Aorta (tissue), 5 donors: ENCODE measurements at regions of chr16 and their contacts with region 1.

Region 1: DNA sequence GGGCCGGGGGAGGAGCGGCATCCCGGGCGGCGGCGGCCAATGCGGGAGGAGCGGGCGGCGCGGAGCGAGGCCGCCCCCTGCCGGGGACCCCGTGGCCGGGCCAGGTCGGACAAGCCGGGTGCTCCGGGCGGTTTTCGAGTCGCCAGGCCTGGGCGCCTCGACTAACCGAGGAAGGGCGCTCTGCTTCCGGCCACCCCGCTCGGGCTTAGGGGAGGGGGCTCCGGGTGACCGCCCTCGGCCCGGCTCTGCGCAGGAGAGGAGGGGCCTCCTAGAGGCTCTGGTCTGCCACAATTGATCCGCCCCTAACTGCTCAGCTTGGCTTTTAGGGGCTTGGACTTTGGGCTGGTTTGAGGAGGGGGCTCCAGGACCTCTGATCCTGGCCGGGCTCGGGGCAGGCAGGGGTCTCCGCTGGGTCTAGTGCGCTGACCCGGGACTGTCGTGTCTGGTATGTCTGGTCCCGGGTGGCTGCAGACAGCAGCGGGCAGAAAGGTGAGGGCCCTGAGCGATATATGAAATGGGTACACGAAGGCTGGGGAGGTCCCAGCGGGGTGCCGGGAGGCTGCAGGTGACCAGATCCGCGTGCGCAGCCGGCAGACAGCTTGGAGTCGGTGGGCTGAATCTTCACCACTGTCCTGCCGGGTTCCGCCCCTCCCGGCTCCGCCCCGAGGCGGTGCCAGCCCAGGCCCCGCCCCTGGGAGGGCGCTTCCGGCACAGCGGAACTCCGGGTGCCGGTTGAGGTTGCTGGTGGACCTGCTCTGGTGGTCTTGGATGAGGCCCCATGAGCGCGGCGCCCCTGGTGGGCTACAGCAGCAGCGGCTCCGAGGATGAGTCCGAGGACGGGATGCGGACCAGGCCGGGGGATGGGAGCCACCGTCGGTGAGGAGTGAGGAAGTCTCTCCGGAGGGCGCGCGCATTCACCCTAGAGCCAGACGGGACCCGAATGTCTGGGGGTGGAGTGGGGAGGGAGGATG is at the start of gene USB1:
- DNase-seq: peak; percentile 90 to 96
- ATAC-seq: peak; percentile 95
- H3K4me3 ChIP-seq: peak within 1 kb of the TSS; percentile 87 to 90
- H3K27ac ChIP-seq: peak within 1 kb of the TSS; percentile 23 to 62
- H3K4me1 ChIP-seq: no peaks in the 10 kb centered on the region
- H3K27me3 ChIP-seq: no peaks in the 10 kb centered on the region
- total RNA-seq, gene USB1: 31.8 to 41.3 TPM

Region 2: GRCh38 chr16:57576429-57576870 is 424.5 kb before region 1 on chr16:
- intact Hi-C with region 1: loop called in 1 of 2 experiments (anchors 10 kb)
- DNase-seq: peak; percentile 77 to 92
- ATAC-seq: peak; percentile 71
- H3K4me3 ChIP-seq: no peak overlapping the region
- H3K27ac ChIP-seq: no peak overlapping the region
- H3K4me1 ChIP-seq: no peaks in the 10 kb centered on the region
- H3K27me3 ChIP-seq: no peaks in the 10 kb centered on the region

Region 3: DNA sequence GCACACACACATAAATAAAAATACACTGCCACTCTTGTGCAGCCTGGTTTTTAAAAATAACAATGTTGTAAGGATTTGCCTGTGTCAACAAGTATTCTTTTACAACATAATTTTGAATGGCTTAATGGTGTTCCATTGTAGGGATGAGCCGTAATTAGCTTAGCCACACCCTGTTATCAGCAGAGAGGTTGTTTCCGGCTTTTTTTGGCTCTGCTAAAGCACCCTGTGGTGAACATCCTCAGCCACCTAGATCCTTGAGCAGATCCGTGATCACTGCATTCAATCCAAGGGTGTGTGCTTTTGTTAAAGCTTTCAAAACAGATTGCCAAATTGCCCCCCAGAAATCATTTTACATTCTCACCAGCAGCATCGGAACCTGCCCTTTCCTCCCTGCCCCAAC is 258.4 kb before region 1 on chr16:
- intact Hi-C with region 1: no loop called
- DNase-seq: no peak
- ATAC-seq: no peak
- H3K4me3 ChIP-seq: no peak overlapping the region
- H3K27ac ChIP-seq: no peak overlapping the region
- H3K4me1 ChIP-seq: no peaks in the 10 kb centered on the region
- H3K27me3 ChIP-seq: no peaks in the 10 kb centered on the region

Region 4: GRCh38 chr16:57757326-57757786 is 243.6 kb before region 1 on chr16:
- intact Hi-C with region 1: loop called (anchors 5 kb)
- DNase-seq: peak; percentile 92 to 97
- ATAC-seq: peak; percentile 88
- H3K4me3 ChIP-seq: no peak overlapping the region
- H3K27ac ChIP-seq: no peak overlapping the region
- H3K4me1 ChIP-seq: no peaks in the 10 kb centered on the region
- H3K27me3 ChIP-seq: no peaks in the 10 kb centered on the region

Region 5: GRCh38 chr16:57802341-57803133 is 198.5 kb before region 1 on chr16 and contains the start of gene KIFC3:
- intact Hi-C with region 1: loop called in 1 of 2 experiments (anchors 5 kb)
- DNase-seq: peak; percentile 94 to 98
- ATAC-seq: peak; percentile 77
- H3K4me3 ChIP-seq: peak within 1 kb of the TSS; percentile 46 to 57
- H3K27ac ChIP-seq: peak within 1 kb of the TSS in 1 of 2 donors; percentile 38
- H3K4me1 ChIP-seq: no peaks in the 10 kb centered on the region
- H3K27me3 ChIP-seq: no peaks in the 10 kb centered on the region
- total RNA-seq, gene KIFC3: 69.7 to 80.1 TPM

Region 6: GRCh38 chr16:57899771-57900661 is 101.0 kb before region 1 on chr16:
- intact Hi-C with region 1: loop called (anchors 2 kb)
- DNase-seq: peak; percentile 77 to 90
- ATAC-seq: peak; percentile 79
- H3K4me3 ChIP-seq: no peak overlapping the region
- H3K27ac ChIP-seq: no peak overlapping the region
- H3K4me1 ChIP-seq: no peaks in the 10 kb centered on the region
- H3K27me3 ChIP-seq: no peaks in the 10 kb centered on the region

Region 7: DNA sequence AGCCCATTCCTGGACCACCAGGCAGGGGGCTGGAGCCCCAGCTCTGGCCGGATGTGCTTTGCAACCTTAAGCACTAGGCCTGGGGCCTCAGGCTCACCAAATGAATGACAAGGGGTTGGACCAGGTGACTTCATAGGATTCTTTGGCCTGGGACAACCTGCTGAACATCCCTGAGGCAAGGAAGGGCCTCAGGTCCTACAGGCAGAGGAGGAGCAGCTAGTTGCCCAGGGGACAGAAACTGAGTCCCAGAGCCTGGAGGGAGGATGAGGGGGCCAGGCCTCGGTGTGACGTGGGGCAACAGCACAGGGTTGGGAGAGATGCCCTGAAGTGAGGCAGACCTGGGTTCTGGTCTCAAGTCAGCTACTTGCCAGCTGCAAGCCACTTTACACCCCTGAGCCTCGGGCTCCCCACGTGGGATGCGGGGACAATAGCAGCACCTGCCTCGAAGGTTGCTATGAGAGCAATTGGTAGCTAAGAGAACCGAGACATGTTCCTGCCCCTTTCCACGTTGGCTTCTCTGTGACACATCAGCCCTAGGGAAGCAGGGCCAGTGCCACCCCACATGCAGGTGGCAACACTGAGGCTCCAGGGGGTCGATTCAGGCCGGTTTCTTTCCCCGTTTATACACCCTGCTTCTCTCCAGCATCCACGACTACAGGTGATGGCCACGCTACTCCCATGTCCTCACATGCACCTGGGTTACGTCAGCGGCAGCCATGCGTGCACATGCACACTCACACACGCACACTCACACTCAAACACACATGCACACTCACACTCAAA is 85.6 kb after region 1 on chr16:
- intact Hi-C with region 1: no loop called
- DNase-seq: no peak
- ATAC-seq: no peak
- H3K4me3 ChIP-seq: no peak overlapping the region
- H3K27ac ChIP-seq: no peak overlapping the region
- H3K4me1 ChIP-seq: no peaks in the 10 kb centered on the region
- H3K27me3 ChIP-seq: no peaks in the 10 kb centered on the region